Left cardiac atrium (tissue), 4 donors: ENCODE measurements at regions of chr20 and their contacts with region 1.

Region 1: GRCh38 chr20:50663095-50663850 is 28.1 kb downstream of the RIPOR3 start:
- DNase-seq: no peak
- ATAC-seq: no peak

Region 2: GRCh38 chr20:50575847-50576720 is 87.2 kb before region 1 on chr20:
- intact Hi-C with region 1: no loop called
- DNase-seq: peak; percentile 70
- ATAC-seq: peak; percentile 60 to 61

Region 3: DNA sequence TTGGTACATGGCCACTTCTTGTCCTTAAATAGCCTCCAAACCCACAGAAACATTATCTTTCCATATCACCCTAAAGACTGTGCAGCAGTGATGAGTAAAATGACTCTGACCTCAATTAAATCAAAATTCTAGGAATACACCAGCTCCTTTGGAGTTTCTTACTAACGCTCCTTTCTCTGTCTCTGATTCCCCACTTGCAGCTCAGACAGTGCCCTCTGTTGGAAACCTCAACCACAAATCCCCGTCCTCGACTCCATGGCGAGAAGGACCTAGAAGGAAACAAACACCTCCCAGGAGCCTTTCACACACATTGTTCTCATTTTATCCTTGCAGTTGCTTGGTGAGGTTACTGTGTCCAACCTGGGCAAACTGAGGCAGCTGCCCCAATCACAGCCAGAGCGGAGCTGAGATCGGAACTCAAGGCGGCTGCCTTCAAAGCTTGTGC is 50.4 kb after region 1 on chr20:
- intact Hi-C with region 1: loop called in 1 of 2 experiments (anchors 10 kb)
- DNase-seq: no peak
- ATAC-seq: peak; percentile 55 to 63

Region 4: GRCh38 chr20:50731055-50731871 is 68.0 kb after region 1 on chr20 and contains the start of gene PARD6B:
- intact Hi-C with region 1: no loop called
- DNase-seq: peak; percentile 96
- ATAC-seq: peak; percentile 95 to 97
- total RNA-seq, gene PARD6B: 3.2 to 4.6 TPM

Region 5: GRCh38 chr20:50744143-50744792 is 81.0 kb after region 1 on chr20:
- intact Hi-C with region 1: loop called in 1 of 2 experiments (anchors 5 kb)
- DNase-seq: peak; percentile 38
- ATAC-seq: peak; percentile 93